Gastrocnemius medialis (tissue), 4 donors: ENCODE measurements at regions of chr6 and their contacts with region 1.

Region 1: GRCh38 chr6:35737413-35738211 is 780 bp downstream of the ARMC12 start:
- DNase-seq: no peak
- ATAC-seq: peak; percentile 84
- H3K4me3 ChIP-seq: no peak overlapping the region
- H3K27ac ChIP-seq: peak overlapping the region in 3 of 4 donors; percentile 28 to 49 (median 39)
- H3K4me1 ChIP-seq: peaks cover 27 to 39% of the 10 kb centered on the region in 2 donors
- H3K27me3 ChIP-seq: no peaks in the 10 kb centered on the region
- CTCF ChIP-seq: peak; percentile 81 to 90 (median 87)
- POLR2A ChIP-seq: no peak

Region 2: GRCh38 chr6:34664256-34664971 is 1073.2 kb before region 1 on chr6:
- in situ Hi-C with region 1: no loop called
- intact Hi-C with region 1: no loop called
- DNase-seq: no peak
- ATAC-seq: no peak
- H3K4me3 ChIP-seq: no peak overlapping the region
- H3K27ac ChIP-seq: peak overlapping the region; percentile 55 to 61 (median 60)
- H3K4me1 ChIP-seq: peaks cover 33 to 49% of the 10 kb centered on the region in 2 donors
- H3K27me3 ChIP-seq: no peaks in the 10 kb centered on the region
- CTCF ChIP-seq: no peak
- POLR2A ChIP-seq: no peak

Region 3: GRCh38 chr6:35522660-35523658 is 214.7 kb before region 1 on chr6:
- in situ Hi-C with region 1: loop called (anchors 5 kb)
- intact Hi-C with region 1: loop called (anchors 1 kb)
- DNase-seq: peak; percentile 41 to 63
- ATAC-seq: peak; percentile 85 to 96
- H3K4me3 ChIP-seq: peak overlapping the region in 3 of 4 donors; percentile 11 to 33 (median 29)
- H3K27ac ChIP-seq: no peak overlapping the region
- H3K4me1 ChIP-seq: no peaks in the 10 kb centered on the region
- H3K27me3 ChIP-seq: no peaks in the 10 kb centered on the region
- CTCF ChIP-seq: peak; percentile 84 to 100 (median 98)
- POLR2A ChIP-seq: no peak